ENCODE measurements at regions of chr4 and their contacts with region 1.

Region 1: GRCh38 chr4:89226665-89227574 is 80.7 kb downstream of the GPRIN3 start:
- DNase-seq: peak; percentile 84
- H3K4me3 ChIP-seq: no peak overlapping the region
- H3K27ac ChIP-seq: no peak overlapping the region
- H3K4me1 ChIP-seq: no peaks in the 10 kb centered on the region
- H3K27me3 ChIP-seq: no peaks in the 10 kb centered on the region
- CTCF ChIP-seq: peak; percentile 4 to 76 (median 58)
- EP300 ChIP-seq: no peak
- POLR2A ChIP-seq: no peak

Region 2: DNA sequence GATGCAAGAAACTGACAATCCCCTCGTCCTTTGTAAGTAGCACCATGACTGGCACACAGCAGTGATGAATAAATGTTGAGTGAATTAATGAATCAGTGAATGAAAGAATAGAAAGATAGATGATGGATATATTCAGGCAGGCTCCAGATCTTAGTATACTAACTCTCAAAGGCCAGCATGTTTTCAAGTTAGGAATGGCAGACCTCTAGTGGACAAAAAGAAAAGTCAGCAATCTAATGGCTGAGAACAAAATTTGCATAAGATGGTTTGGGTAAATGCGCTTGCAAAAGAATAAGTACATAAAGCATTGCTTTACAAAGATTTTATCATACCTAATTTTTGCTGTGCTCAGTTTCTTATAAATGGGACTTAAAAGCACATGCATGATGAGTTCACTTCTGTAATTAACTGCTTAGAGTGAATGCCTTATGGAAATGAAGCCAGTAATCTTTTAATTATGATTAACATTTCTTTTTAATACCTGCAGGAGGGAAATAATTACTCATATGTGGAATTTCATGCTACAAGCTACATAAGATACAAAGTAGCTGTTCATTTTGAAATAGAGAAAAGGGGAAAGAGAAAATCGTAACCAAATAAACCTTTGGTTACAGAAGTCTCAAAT is 207.6 kb after region 1 on chr4:
- intact Hi-C with region 1: loop called (anchors 2 kb)
- DNase-seq: no peak
- H3K4me3 ChIP-seq: no peak overlapping the region
- H3K27ac ChIP-seq: no peak overlapping the region
- H3K4me1 ChIP-seq: no peaks in the 10 kb centered on the region
- H3K27me3 ChIP-seq: no peaks in the 10 kb centered on the region
- CTCF ChIP-seq: peak in 3 of 4 experiments; percentile 41 to 55 (median 49)
- EP300 ChIP-seq: no peak
- POLR2A ChIP-seq: no peak

Region 3: DNA sequence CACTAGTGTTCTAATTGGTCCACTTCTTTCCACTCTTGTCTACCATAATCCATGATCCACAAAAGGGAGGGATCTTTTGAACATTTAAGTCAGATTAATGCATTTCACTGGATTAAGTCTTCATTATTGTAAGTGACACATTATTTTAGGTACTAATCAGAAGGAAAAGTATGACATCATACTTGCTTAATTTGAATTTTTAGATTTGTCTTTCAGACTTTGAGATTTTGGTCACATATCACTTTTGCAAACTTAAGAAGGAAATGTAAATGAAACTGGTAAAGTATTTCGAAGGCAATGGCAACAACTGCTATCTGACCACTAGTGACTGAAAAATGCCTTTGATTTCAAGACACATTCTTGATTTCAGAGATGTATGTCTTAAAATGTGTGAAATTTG is 672.9 kb after region 1 on chr4:
- intact Hi-C with region 1: loop called (anchors 2 kb)
- DNase-seq: no peak
- H3K4me3 ChIP-seq: no peak overlapping the region
- H3K27ac ChIP-seq: no peak overlapping the region
- H3K4me1 ChIP-seq: no peaks in the 10 kb centered on the region
- H3K27me3 ChIP-seq: no peaks in the 10 kb centered on the region
- CTCF ChIP-seq: no peak
- EP300 ChIP-seq: no peak
- POLR2A ChIP-seq: no peak

Measured in sigmoid colon (tissue), 7 donors.